Tibial artery (tissue), 4 donors: ENCODE measurements at regions of chr7 and their contacts with region 1.

Region 1: DNA sequence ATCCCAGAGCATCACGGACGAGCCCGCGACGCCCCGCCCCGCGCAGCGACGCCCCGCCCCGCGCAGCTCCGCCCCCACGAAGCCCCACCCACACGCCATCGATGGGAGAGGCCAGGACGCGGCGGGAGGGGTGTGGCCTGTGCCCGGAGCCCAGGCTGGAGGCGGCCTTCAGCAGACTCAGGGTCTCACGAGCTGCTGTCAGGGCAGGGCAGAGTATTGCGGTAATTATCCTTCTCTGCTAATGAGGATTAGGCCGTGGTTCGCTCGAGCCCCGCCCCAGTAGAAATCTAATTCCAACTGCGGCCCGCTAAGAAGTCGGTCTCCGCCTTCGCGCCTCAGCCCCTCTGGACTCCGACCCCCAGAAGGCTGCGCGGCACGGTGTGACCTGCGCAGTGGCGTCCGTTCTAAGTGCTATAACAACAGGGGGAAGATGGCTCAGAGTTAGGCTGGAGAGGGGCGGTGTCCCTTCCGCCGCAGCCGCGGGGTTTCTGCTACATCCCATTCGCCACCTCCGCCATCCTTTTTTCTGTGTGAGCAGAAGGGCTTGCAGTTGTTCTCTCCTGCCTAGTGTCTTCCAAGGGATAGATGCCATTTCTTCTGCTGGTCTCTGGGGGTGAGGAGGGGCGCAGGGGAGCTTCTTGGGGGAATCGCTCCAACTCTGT is 337 bp upstream of the NT5C3A start:
- DNase-seq: peak; percentile 91 to 94
- H3K4me3 ChIP-seq: peak overlapping the region; percentile 78 to 85
- H3K27ac ChIP-seq: peak overlapping the region; percentile 93 to 96
- H3K4me1 ChIP-seq: peaks cover 0 to 20% (median 16%) of the 10 kb centered on the region in 4 donors
- H3K27me3 ChIP-seq: no peaks in the 10 kb centered on the region
- CTCF ChIP-seq: no peak

Region 2: DNA sequence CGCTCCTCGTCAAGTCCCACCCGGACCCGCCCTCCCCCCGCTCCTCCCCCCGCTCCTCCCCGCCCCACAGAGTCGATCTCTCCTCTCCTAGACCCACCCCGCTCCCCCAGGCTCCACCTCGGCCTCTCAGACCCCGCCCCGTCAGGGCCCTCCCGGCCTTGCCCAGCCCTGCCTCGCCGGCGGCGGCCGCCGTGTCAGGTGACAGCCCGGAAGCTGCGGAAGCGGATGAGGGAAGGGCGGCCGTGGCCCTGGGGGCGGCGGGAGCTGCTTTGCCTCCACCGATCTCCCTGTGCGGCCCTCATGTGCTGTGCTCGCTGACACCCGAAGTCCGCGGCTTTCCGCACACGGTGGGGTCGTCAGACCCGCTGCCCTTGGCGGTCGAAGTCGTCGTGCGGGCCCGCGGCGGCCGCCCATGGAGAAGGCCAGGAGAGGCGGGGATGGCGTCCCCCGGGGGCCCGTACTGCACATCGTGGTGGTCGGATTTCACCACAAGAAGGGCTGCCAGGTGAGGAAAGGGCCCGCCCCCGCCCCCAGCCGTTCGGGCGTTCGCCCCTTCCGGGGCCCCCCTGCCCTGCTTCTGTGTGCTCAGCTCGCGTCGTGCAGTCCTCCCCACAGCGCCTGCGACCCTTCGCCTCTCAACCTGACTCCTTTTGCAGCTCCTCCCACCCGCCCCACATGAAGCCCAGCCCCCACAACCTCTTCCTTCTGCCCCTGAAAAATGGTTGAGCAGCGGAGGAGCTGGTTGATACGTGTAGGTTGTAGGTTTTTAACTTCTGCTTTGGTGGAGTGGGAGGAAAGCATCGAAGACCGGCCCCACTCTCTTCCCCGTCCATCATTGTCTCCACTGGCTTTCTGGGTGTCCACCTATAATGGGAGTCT is 567.4 kb before region 1 on chr7 and contains the start of gene AVL9:
- intact Hi-C with region 1: loop called (anchors 10 kb)
- DNase-seq: peak; percentile 98 to 99
- H3K4me3 ChIP-seq: peak within 1 kb of the TSS; percentile 99 to 100
- H3K27ac ChIP-seq: peak within 1 kb of the TSS; percentile 99 to 100
- H3K4me1 ChIP-seq: peaks cover 0 to 24% (median 13%) of the 10 kb centered on the region in 4 donors
- H3K27me3 ChIP-seq: no peaks in the 10 kb centered on the region
- CTCF ChIP-seq: no peak

Region 3: GRCh38 chr7:33012364-33012763 is 50.5 kb before region 1 on chr7:
- intact Hi-C with region 1: no loop called
- DNase-seq: no peak
- H3K4me3 ChIP-seq: no peak overlapping the region
- H3K27ac ChIP-seq: no peak overlapping the region
- H3K4me1 ChIP-seq: no peaks in the 10 kb centered on the region
- H3K27me3 ChIP-seq: no peaks in the 10 kb centered on the region
- CTCF ChIP-seq: no peak

Region 4: DNA sequence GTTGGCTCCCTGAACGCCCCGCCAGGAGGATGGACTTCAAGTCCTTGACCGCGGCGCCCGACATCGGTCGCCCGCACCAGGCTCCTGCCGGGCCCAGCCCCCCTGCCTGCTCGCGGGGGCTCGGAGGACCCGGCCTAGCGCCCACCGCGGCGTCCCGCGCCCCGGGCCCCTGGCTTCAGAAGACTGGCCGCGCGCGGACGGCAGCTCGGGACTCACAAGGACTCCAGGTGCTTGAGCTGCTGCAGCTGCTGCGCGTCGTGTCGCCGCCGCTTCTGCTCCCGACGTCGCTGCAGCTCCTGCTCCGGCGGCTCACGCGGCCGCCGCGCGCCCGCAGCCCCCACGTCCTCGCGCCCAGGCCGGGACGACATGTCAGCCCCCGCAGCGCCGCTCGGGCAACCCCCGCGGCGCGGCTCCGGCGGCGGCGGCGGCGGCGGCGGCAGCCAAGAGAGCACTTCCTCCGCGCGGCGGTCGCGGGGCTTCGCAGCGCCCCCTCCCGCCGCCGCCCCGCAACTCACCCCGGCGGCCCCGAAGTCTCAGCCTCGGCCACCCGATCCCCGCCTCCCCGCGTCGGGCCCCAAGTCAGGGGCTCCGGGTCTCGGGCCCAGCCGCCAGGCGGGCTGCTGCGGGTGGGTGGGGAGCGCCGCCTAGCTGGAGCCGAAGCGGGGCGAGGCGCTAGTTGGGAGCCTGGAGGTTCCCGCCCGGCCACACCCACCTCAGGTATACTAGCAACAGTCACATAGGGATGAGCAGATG is 46.3 kb after region 1 on chr7 and contains the start of gene RP9:
- intact Hi-C with region 1: loop called (anchors 5 kb)
- DNase-seq: peak; percentile 48 to 76
- H3K4me3 ChIP-seq: peak within 1 kb of the TSS; percentile 91 to 99
- H3K27ac ChIP-seq: peak within 1 kb of the TSS; percentile 83 to 87
- H3K4me1 ChIP-seq: peaks cover 0 to 37% (median 28%) of the 10 kb centered on the region in 4 donors
- H3K27me3 ChIP-seq: no peaks in the 10 kb centered on the region
- CTCF ChIP-seq: peak; percentile 53 to 69

Region 5: DNA sequence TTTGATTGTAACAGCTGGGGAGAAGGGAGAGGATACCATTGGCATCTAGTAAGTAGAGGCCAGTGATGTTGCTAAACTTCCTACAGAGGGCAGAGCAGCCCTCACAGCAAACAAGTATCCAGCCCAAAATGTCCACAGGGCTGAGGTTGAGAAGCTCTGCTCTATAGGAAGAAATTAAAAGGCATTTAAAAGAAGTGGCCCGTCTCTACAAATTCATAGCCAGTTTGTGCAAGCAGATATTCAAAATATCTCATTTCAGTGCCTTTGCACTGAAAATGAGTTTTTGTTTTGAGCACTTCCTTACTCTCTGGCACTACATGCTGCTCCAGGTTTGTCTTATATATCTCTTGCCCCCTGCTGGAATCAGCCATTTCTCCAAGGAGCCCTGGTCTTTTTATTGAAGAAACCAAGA is 396.4 kb after region 1 on chr7:
- intact Hi-C with region 1: no loop called
- DNase-seq: no peak
- H3K4me3 ChIP-seq: no peak overlapping the region
- H3K27ac ChIP-seq: no peak overlapping the region
- H3K4me1 ChIP-seq: no peaks in the 10 kb centered on the region
- H3K27me3 ChIP-seq: no peaks in the 10 kb centered on the region
- CTCF ChIP-seq: peak; percentile 26 to 36

Region 6: DNA sequence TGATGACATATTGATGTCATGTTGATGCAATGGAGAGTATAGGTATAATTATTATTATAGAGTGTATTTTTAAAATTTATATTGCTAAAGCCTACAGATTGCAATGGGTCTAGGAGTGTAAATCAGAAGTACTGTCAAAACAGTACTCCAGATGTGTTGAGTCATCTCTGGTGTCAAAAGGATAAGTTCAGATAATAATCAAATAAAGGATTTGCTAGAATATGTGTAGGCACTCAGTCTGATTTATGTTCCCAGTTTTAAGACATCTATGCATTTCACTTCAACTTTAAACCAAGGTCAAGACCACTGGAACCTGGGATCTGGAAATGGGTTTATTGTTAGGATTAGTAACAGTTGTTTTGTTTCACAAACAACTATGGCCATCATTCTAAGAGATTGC is 500.1 kb after region 1 on chr7:
- intact Hi-C with region 1: no loop called
- DNase-seq: no peak
- H3K4me3 ChIP-seq: no peak overlapping the region
- H3K27ac ChIP-seq: no peak overlapping the region
- H3K4me1 ChIP-seq: no peaks in the 10 kb centered on the region
- H3K27me3 ChIP-seq: no peaks in the 10 kb centered on the region
- CTCF ChIP-seq: no peak